Naive thymus-derived CD4-positive, alpha-beta T cell (primary cell): ENCODE measurements at regions of chrX and their contacts with region 1.

Region 1: GRCh38 chrX:56563231-56564161 is at the start of gene UBQLN2:
- DNase-seq: peak; percentile 57 to 78 (median 74)
- ATAC-seq: peak; percentile 89
- H3K4me3 ChIP-seq: peak within 1 kb of the TSS; percentile 98
- H3K4me3 Mint-ChIP-seq: peak within 1 kb of the TSS; percentile 88 to 98 (median 94)
- H3K27ac ChIP-seq: peak within 1 kb of the TSS; percentile 85
- H3K27ac Mint-ChIP-seq: peak within 1 kb of the TSS; percentile 93 to 100 (median 98)
- H3K4me1 ChIP-seq: peaks cover 4 to 5% of the 10 kb centered on the region in 2 donors
- H3K4me1 Mint-ChIP-seq: peaks cover 5 to 20% (median 15%) of the 10 kb centered on the region in 7 donors
- H3K27me3 ChIP-seq: no peaks in the 10 kb centered on the region
- H3K27me3 Mint-ChIP-seq: no peaks in the 10 kb centered on the region
- total RNA-seq, gene UBQLN2: 48.8 to 76.5 (median 56.8) TPM

Region 2: GRCh38 chrX:55039506-55039905 is 1524.0 kb before region 1 on chrX:
- CTCF ChIA-PET with region 1: no interaction called
- POLR2A ChIA-PET with region 1: no interaction called
- intact Hi-C with region 1: no loop called
- DNase-seq: no peak
- ATAC-seq: no peak
- H3K4me3 ChIP-seq: no peak overlapping the region
- H3K4me3 Mint-ChIP-seq: no peak overlapping the region
- H3K27ac ChIP-seq: no peak overlapping the region
- H3K27ac Mint-ChIP-seq: no peak overlapping the region
- H3K4me1 ChIP-seq: no peaks in the 10 kb centered on the region
- H3K4me1 Mint-ChIP-seq: no peaks in the 10 kb centered on the region
- H3K27me3 ChIP-seq: no peaks in the 10 kb centered on the region
- H3K27me3 Mint-ChIP-seq: no peaks in the 10 kb centered on the region

Region 3: DNA sequence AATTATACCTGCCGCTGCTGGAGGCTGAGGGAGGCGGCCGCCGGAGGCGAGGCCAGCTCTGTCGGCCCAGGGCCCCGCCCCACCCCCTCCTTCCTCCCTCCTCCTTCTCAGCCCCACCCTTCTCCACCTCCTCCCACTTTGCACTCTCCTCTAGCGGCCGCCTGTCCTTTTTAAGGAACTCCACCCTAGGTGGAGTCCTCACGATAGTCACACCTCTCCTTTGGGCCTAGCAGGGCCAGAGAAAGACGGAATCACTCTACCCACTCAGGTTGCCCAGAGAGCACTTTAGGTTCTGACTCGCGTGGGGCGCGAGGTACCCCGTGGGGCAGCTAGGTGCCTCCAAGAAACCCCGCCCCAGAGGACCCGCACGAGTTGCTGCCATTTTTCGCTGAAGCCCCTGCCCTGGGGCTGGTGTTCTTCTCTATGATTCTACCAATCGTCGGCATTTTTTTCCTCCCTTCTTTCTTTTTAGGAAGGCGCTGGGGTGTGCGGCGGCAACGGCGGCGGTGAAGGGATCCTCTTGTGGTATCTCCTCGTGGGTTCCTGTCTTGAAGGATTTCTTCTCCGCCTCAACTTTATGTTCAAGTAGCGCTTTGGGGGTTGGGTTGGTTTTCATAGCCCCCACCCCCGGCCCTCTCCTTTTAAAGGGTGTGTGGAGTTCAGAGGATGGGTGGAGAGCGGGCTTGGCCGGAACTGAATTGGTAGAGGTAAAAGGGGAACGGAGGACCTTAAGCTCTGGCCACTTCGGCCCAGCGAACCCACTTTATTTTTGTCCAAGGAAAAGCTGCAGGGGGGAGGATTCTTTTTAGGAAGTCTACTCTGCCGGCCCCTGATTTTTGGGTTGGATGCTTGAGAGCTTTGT is 331.0 kb before region 1 on chrX and contains the start of gene KLF8:
- CTCF ChIA-PET with region 1: no interaction called
- POLR2A ChIA-PET with region 1: no interaction called
- intact Hi-C with region 1: loop called in 1 of 2 experiments (anchors 5 kb)
- DNase-seq: peak in 6 of 9 donors; percentile 3 to 40 (median 8)
- ATAC-seq: peak; percentile 73
- H3K4me3 ChIP-seq: peak within 1 kb of the TSS; percentile 41
- H3K4me3 Mint-ChIP-seq: peak within 1 kb of the TSS; percentile 80 to 89 (median 84)
- H3K27ac ChIP-seq: no peak within 1 kb of the TSS
- H3K27ac Mint-ChIP-seq: peak within 1 kb of the TSS in 6 of 9 donors; percentile 1 to 90 (median 32)
- H3K4me1 ChIP-seq: peaks cover 0 to 5% of the 10 kb centered on the region in 2 donors
- H3K4me1 Mint-ChIP-seq: peaks cover 5 to 48% (median 18%) of the 10 kb centered on the region in 7 donors
- H3K27me3 ChIP-seq: no peaks in the 10 kb centered on the region
- H3K27me3 Mint-ChIP-seq: peaks cover 0 to 4% (median 0%) of the 10 kb centered on the region in 5 donors
- total RNA-seq, gene KLF8: 0.38 to 17.9 (median 6.3) TPM

Region 4: DNA sequence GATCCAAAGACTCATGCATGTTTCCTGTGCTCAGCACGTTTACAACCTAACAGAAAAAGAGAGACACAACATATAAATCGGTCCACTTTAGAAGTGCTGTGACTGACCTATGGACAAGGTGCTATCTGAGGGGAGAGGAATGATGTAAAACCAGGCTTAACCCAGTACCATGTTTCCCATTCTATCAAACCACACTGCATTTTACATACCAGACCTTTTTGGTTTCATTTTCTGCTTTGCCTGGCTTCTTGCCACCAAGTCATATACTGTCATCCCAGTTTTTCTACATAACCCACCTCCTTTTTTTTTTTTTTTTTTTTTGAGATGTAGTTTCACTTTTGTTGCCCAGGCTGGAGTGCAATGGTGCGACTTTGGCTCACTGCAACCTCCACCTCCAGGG is 249.2 kb before region 1 on chrX:
- CTCF ChIA-PET with region 1: no interaction called
- POLR2A ChIA-PET with region 1: no interaction called
- intact Hi-C with region 1: loop called in 1 of 2 experiments (anchors 10 kb)
- DNase-seq: peak in 5 of 9 donors; percentile 0 to 32 (median 11)
- ATAC-seq: no peak
- H3K4me3 ChIP-seq: no peak overlapping the region
- H3K4me3 Mint-ChIP-seq: peak overlapping the region in 8 of 10 donors; percentile 46 to 79 (median 68)
- H3K27ac ChIP-seq: no peak overlapping the region
- H3K27ac Mint-ChIP-seq: peak overlapping the region in 7 of 9 donors; percentile 5 to 88 (median 59)
- H3K4me1 ChIP-seq: no peaks in the 10 kb centered on the region
- H3K4me1 Mint-ChIP-seq: peaks cover 0 to 15% (median 11%) of the 10 kb centered on the region in 7 donors
- H3K27me3 ChIP-seq: no peaks in the 10 kb centered on the region
- H3K27me3 Mint-ChIP-seq: no peaks in the 10 kb centered on the region

Region 5: GRCh38 chrX:56382278-56382677 is 181.2 kb before region 1 on chrX:
- CTCF ChIA-PET with region 1: no interaction called
- POLR2A ChIA-PET with region 1: no interaction called
- intact Hi-C with region 1: loop called (anchors 1 to 5 kb)
- DNase-seq: peak in 1 of 9 donors; percentile 24
- ATAC-seq: no peak
- H3K4me3 ChIP-seq: no peak overlapping the region
- H3K4me3 Mint-ChIP-seq: peak overlapping the region in 6 of 10 donors; percentile 7 to 78 (median 44)
- H3K27ac ChIP-seq: no peak overlapping the region
- H3K27ac Mint-ChIP-seq: peak overlapping the region in 8 of 9 donors; percentile 29 to 92 (median 80)
- H3K4me1 ChIP-seq: peaks cover 0 to 23% of the 10 kb centered on the region in 2 donors
- H3K4me1 Mint-ChIP-seq: peaks cover 18 to 53% (median 38%) of the 10 kb centered on the region in 7 donors
- H3K27me3 ChIP-seq: no peaks in the 10 kb centered on the region
- H3K27me3 Mint-ChIP-seq: no peaks in the 10 kb centered on the region

Region 6: GRCh38 chrX:56588397-56589188 is 25.1 kb after region 1 on chrX:
- CTCF ChIA-PET with region 1: no interaction called
- POLR2A ChIA-PET with region 1: no interaction called
- intact Hi-C with region 1: no loop called
- DNase-seq: no peak
- ATAC-seq: no peak
- H3K4me3 ChIP-seq: no peak overlapping the region
- H3K4me3 Mint-ChIP-seq: peak overlapping the region in 1 of 10 donors; percentile 21
- H3K27ac ChIP-seq: no peak overlapping the region
- H3K27ac Mint-ChIP-seq: peak overlapping the region in 1 of 9 donors; percentile 31
- H3K4me1 ChIP-seq: no peaks in the 10 kb centered on the region
- H3K4me1 Mint-ChIP-seq: peaks cover 0 to 10% (median 4%) of the 10 kb centered on the region in 7 donors
- H3K27me3 ChIP-seq: no peaks in the 10 kb centered on the region
- H3K27me3 Mint-ChIP-seq: no peaks in the 10 kb centered on the region

Region 7: DNA sequence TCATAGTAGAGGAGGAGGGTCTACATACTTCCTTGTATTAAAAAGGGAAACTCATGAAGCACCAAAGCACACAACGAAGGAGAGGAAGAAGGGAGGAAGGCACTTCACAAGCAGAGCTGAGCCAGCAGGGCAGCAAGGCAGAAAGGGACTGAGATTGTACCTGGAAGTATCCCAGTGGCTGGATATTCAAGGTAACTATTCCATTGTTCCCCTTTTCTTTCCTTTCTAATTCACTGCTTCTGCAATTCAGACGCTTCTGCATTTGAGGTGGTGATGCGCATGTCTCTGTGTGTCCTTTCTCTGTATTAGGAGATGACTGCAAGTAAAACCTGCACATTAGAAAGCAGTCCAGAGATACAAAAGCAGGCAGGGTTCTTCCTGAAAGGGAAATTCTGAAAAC is 54.8 kb after region 1 on chrX:
- CTCF ChIA-PET with region 1: no interaction called
- POLR2A ChIA-PET with region 1: no interaction called
- intact Hi-C with region 1: no loop called
- DNase-seq: no peak
- ATAC-seq: no peak
- H3K4me3 ChIP-seq: no peak overlapping the region
- H3K4me3 Mint-ChIP-seq: no peak overlapping the region
- H3K27ac ChIP-seq: no peak overlapping the region
- H3K27ac Mint-ChIP-seq: peak overlapping the region in 1 of 9 donors; percentile 48
- H3K4me1 ChIP-seq: no peaks in the 10 kb centered on the region
- H3K4me1 Mint-ChIP-seq: peaks cover 0 to 19% (median 10%) of the 10 kb centered on the region in 7 donors
- H3K27me3 ChIP-seq: no peaks in the 10 kb centered on the region
- H3K27me3 Mint-ChIP-seq: no peaks in the 10 kb centered on the region